ENCODE measurements at regions of chr15 and their contacts with region 1.

Region 1: GRCh38 chr15:100349696-100350433 is 8.1 kb upstream of the ADAMTS17 start:
- DNase-seq: peak; percentile 90
- H3K4me3 Mint-ChIP-seq: peak overlapping the region; percentile 86
- H3K27ac Mint-ChIP-seq: peak overlapping the region; percentile 67
- H3K4me1 Mint-ChIP-seq: peaks cover 10% of the 10 kb centered on the region
- H3K27me3 Mint-ChIP-seq: peaks cover 12% of the 10 kb centered on the region

Region 2: DNA sequence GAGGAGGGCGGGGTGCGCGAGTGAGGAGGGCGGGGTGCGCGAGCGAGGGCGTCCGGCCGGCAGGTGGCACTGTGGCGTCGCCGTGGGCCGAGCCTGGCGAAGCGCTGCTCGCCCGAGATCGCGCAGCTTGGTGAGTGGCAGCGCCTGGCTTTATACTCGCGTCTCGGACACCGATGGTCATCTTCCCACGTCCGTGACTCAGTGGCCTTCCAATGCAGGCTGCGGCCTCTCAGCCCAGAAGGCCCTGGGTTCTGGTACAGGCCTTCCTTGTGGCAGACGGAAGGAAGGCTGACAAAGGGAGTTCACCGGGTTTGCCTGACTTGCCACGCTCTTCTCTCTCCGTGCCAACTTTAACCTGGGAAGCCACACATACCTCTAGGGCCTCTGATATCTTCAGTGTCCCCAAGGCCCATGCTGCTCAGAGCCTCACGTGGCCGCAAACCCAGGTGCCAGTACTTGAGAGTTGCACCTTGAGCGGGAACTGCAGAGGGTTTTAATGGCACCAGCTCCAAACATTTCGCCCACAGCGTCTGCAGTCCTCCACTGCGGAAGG is 421.4 kb before region 1 on chr15:
- CTCF ChIA-PET with region 1: interaction called, 24 read pairs
- POLR2A ChIA-PET with region 1: no interaction called
- DNase-seq: peak; percentile 86
- H3K4me3 Mint-ChIP-seq: peak overlapping the region; percentile 79
- H3K27ac Mint-ChIP-seq: peak overlapping the region; percentile 76
- H3K4me1 Mint-ChIP-seq: peaks cover 14% of the 10 kb centered on the region
- H3K27me3 Mint-ChIP-seq: peaks cover 14% of the 10 kb centered on the region

Region 3: DNA sequence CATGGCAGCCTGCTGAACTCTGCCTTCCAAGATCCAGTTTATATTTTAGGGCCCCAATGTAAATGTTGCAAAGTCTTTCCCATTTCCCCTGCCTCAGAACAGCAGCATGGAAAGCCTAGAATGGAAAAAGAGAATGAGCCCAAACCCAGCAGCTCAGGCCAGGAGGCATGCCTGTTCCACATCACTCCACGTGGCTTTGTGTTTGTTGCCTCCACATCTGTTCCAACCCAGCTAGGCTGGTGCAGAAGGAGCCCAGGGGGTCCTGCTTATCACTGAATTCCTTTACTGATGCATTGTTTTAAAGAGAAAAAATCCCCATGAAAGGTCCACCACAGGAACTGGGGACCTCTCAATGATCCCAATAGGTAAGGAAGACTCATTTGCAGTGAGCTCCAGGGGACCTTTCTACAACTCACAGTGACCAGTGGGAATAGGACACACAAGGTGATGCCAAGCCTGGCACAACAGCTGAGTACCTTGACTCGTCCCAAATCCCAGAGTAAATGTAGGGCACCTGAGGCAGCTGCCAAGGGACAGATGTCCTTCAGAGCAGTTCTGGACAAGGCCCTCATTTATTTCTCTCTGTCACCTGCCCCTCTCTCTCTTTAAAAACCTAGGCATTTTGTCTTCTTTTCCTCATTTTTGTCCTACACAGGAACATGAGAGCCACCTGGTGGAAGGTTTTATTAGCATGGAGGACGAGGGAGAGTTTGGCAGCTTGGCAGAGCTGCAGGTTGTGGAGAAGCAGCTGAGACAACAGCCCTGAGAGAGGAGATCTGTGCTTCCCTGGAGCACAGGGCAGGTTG is 33.6 kb after region 1 on chr15:
- CTCF ChIA-PET with region 1: interaction called, 11 read pairs
- POLR2A ChIA-PET with region 1: no interaction called
- DNase-seq: no peak
- H3K4me3 Mint-ChIP-seq: no peak overlapping the region
- H3K27ac Mint-ChIP-seq: no peak overlapping the region
- H3K4me1 Mint-ChIP-seq: no peaks in the 10 kb centered on the region
- H3K27me3 Mint-ChIP-seq: no peaks in the 10 kb centered on the region

Region 4: GRCh38 chr15:100596792-100597191 is 246.9 kb after region 1 on chr15:
- CTCF ChIA-PET with region 1: interaction called, 42 read pairs
- POLR2A ChIA-PET with region 1: interaction called, 14 read pairs
- DNase-seq: peak; percentile 97
- H3K4me3 Mint-ChIP-seq: peak overlapping the region; percentile 71
- H3K27ac Mint-ChIP-seq: peak overlapping the region; percentile 93
- H3K4me1 Mint-ChIP-seq: peaks cover 71% of the 10 kb centered on the region
- H3K27me3 Mint-ChIP-seq: no peaks in the 10 kb centered on the region

Region 5: DNA sequence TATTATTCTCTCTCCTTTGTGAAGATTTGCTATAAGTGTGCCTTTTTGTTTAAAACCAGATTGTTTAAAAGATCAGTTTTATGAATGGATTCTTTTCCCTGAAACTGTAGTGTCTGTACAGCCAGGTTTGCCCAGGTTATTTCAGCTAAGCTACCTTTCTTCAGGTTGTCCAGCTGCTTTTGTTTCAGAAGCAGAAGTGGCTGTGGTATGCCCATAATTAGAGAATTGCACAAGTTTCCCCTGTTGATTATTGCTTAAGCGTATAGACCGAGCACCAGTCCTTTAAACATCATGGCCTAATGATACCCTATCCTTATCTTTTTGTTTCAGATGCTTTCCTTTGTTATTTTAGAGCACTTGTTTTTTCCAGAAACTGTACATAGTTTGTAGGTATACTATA is 262.7 kb after region 1 on chr15:
- CTCF ChIA-PET with region 1: interaction called, 25 read pairs
- POLR2A ChIA-PET with region 1: interaction called, 3 read pairs
- DNase-seq: no peak
- H3K4me3 Mint-ChIP-seq: no peak overlapping the region
- H3K27ac Mint-ChIP-seq: no peak overlapping the region
- H3K4me1 Mint-ChIP-seq: peaks cover 7% of the 10 kb centered on the region
- H3K27me3 Mint-ChIP-seq: no peaks in the 10 kb centered on the region

Region 6: GRCh38 chr15:100873029-100873677 is 523.3 kb after region 1 on chr15:
- CTCF ChIA-PET with region 1: interaction called, 14 read pairs
- POLR2A ChIA-PET with region 1: no interaction called
- DNase-seq: peak; percentile 46
- H3K4me3 Mint-ChIP-seq: no peak overlapping the region
- H3K27ac Mint-ChIP-seq: no peak overlapping the region
- H3K4me1 Mint-ChIP-seq: no peaks in the 10 kb centered on the region
- H3K27me3 Mint-ChIP-seq: peaks cover 32% of the 10 kb centered on the region

Measured in activated CD4-positive, alpha-beta memory T cell treated with anti-CD3 and anti-CD28 coated beads, Interleukin-2, amount 10 ng/mL, durations not matched to agents 7 days and 5 days (primary cell).